ENCODE measurements at regions of chr18 and their contacts with region 1.

Region 1: DNA sequence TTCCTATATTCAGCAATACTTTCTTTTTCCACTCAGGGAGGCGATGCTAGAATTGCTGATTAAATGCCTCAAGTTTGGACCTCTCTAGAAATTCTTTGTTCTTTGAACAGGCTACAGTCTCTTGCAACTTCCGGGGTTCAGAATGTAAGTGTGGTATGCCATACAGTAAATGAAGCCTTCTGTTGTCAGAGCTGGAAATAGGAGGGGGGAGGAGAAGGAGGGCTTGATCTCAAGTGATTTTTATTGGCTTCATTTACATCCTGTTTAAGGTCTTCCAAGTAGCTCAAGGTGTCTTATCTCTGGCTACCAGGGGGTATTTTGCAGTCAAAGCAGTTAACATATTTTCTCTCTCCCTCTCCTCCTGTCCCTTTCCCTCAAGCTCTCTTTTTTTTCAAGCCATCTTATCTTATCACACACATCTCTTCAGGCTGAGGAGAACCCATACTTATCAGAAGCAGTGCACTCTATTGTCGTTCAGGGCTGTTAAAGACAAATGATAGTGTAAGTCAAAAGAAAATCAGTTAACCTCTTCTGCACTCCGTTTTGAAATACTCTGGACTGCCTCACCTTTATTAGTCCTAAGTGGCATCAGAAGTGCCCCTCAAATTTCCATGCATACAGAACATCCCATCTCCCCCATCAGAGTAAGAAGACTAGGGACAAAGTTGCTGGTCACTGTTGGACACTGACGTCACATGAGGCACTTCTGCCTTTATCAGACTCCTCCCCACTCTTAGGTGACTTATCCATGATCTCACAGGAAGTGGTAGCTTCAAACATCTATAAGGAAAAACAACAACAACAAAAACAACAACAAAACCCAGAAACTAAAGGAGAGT is 112.2 kb downstream of the ZNF521 start:
- DNase-seq: no peak
- H3K4me3 ChIP-seq: no peak overlapping the region
- H3K27ac ChIP-seq: no peak overlapping the region
- H3K4me1 ChIP-seq: no peaks in the 10 kb centered on the region
- H3K27me3 ChIP-seq: no peaks in the 10 kb centered on the region
- CTCF ChIP-seq: no peak

Region 2: DNA sequence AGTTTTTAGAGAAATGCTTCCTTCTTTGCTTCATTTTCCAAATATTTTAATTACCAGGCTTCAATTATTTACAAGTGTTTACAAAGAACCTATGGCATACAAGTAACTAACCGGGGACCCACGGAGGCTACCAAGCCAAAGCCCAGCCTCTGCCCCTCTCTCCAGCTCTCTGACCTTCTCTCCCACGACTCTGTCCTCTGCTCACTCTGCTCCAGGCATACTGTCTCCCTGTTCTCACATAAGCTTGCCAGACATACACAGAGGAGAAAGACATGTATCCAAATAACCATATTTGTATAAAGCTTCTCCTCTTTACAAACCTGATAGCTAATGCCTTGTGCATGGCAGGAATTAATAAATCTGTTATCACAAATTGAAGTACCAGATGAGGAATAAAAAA is 29.2 kb before region 1 on chr18:
- intact Hi-C with region 1: loop called (anchors 2 kb)
- DNase-seq: no peak
- H3K4me3 ChIP-seq: no peak overlapping the region
- H3K27ac ChIP-seq: no peak overlapping the region
- H3K4me1 ChIP-seq: no peaks in the 10 kb centered on the region
- H3K27me3 ChIP-seq: no peaks in the 10 kb centered on the region
- CTCF ChIP-seq: no peak